Calu3 (cell line): ENCODE measurements at regions of chr1 and their contacts with region 1.

Region 1: DNA sequence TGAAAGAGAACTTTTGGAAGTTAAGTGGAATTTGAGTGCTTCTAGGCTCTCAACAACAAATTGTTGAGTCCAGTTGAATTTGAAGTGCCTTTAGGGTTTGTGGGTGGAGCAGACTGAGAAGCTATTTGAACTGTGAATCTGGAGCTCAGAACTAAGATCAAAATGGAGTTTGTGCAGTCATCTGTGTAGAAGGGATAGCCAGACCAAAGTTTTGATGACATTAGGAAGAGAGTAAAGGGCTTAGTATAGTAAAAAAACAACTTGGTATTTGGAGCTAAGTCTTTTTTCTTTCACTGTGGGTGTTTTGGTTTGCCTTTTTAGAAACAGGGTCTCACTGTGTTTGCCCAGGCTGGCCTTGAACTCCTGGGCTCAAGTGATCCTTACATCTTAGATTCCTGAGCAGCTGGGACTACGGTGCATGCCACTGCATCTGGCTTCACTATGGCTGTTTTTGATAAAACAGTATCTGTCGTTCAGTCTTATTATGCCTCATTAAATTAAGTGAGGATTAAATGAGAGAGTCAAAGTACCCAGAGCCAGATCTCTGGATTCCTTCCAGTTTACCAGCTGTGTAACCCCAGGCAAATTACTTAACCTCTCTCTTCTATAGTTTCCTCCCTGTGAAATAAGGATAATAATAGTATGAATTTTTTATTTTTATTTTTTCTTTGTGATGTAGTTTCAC is 20.0 kb downstream of the HDAC1 start:
- DNase-seq: no peak
- H3K4me3 Mint-ChIP-seq: no peak overlapping the region
- H3K27ac Mint-ChIP-seq: no peak overlapping the region
- H3K4me1 Mint-ChIP-seq: peaks cover 38% of the 10 kb centered on the region
- H3K27me3 Mint-ChIP-seq: no peaks in the 10 kb centered on the region
- CTCF ChIP-seq: no peak

Region 2: DNA sequence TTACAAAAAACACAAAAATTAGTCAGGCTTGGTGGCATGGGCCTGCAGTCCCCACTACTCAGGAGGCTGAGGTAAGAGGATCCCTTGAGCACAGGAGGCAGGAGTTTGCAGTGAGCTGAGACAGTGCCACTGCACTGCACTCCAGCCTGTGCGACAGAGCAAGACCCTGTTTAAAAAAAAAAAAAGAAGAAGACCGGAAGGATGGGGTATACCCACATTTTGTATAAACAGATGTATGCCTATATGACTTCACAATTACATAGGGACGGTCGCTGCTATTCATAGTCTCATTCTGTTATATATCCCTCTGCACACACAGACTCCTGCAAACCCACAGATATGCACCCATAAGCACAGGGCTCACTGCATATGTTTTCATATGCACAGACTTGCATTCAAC is 48.1 kb before region 1 on chr1:
- CTCF ChIA-PET with region 1: no interaction called
- intact Hi-C with region 1: loop called (anchors 1 kb)
- DNase-seq: no peak
- H3K4me3 Mint-ChIP-seq: no peak overlapping the region
- H3K27ac Mint-ChIP-seq: no peak overlapping the region
- H3K4me1 Mint-ChIP-seq: peaks cover 17% of the 10 kb centered on the region
- H3K27me3 Mint-ChIP-seq: no peaks in the 10 kb centered on the region
- CTCF ChIP-seq: no peak

Region 3: DNA sequence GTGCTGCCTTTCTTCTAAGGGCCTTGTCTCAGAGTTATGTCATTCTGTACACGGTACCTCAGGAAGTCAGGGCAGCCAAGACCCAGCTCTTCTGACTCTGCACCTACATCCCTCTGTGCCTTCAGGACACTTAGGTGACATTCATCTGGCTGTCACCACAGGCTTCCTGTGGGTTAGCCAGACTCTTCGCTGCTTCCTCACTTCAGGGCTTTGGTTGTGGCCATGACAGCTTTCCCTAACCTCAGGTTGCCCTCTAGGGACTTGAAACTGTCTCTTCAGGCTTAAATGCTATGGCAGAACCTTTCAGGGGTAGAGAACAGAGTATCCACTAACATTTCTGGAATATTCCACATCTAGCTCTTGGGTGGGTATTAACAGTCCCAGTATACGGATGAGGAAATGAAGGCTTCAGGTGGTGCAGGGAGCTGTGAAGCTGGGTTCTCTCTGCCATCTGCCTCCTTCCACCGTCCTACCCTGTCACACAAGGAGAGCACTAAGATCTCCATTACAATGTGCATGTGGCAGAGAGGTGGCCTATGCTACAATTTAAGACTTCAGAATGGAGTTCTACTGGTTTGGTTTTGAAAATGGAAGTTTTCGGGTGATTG is 60.4 kb after region 1 on chr1:
- CTCF ChIA-PET with region 1: no interaction called
- intact Hi-C with region 1: no loop called
- DNase-seq: no peak
- H3K4me3 Mint-ChIP-seq: no peak overlapping the region
- H3K27ac Mint-ChIP-seq: no peak overlapping the region
- H3K4me1 Mint-ChIP-seq: no peaks in the 10 kb centered on the region
- H3K27me3 Mint-ChIP-seq: no peaks in the 10 kb centered on the region
- CTCF ChIP-seq: no peak

Region 4: GRCh38 chr1:33429856-33430691 is 1118.2 kb after region 1 on chr1:
- CTCF ChIA-PET with region 1: no interaction called
- intact Hi-C with region 1: no loop called
- DNase-seq: peak; percentile 73
- H3K4me3 Mint-ChIP-seq: no peak overlapping the region
- H3K27ac Mint-ChIP-seq: no peak overlapping the region
- H3K4me1 Mint-ChIP-seq: peaks cover 10% of the 10 kb centered on the region
- H3K27me3 Mint-ChIP-seq: no peaks in the 10 kb centered on the region
- CTCF ChIP-seq: peak; percentile 67